H1 (cell line): ENCODE measurements at regions of chr10 and their contacts with region 1.

Region 1: DNA sequence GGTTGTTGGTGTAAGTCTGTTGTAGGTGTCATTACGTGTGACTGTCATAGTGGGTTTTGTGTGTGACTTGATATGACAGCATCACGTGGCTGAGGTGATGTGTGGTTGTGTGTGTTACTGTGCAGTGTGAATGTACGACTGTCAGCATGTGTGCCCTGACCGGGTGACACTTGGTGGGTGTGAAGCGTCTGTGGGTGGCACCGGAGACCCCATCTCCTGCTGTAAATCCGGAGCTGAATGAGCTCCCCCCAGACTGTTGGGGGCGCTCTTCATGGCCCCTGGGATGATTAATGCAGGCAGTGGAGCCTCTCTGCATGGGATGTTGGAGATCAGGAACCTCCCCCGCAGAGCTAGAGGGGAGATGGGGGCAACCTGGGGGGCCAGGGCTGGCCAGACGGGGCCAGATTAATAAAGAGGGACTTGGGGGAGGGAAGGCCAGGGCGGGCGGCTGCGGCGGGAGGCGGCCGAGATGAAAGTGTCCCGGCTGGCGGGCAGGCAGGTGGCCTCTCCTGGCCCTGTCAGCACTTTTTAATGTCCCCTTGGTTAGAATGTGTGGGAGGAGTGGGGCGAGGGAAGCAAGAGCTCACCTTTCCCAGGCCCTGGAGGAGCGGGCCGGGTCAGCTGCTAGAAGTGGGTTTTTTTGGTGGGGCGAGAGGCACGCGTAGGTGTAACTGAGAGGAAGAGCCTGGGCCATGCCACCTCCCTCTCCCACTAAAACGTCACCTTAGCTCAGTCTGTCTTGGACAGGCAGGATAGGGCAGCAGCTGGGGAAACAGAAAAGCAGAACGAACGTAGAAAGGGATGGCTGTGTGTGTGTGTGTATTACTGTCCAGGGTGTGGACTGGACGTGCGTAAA is 34.1 kb downstream of the HIF1AN start:
- DNase-seq: peak in 1 of 2 experiments; percentile 71
- H3K4me3 ChIP-seq: peak overlapping the region; percentile 52 to 78 (median 67)
- H3K27ac ChIP-seq: no peak overlapping the region
- H3K4me1 ChIP-seq: peaks cover 0 to 4% (median 2%) of the 10 kb centered on the region in 4 experiments; a peak in 4 of 7 replicates
- H3K27me3 ChIP-seq: peaks cover 0 to 24% (median 10%) of the 10 kb centered on the region in 4 experiments; a peak in 6 of 7 replicates
- CTCF ChIP-seq: peak; percentile 78 to 88 (median 83)
- EP300 ChIP-seq: no peak; a peak in 1 of 3 replicates
- POLR2A ChIP-seq: no peak
- RAD21 ChIP-seq: peak; percentile 49 to 72

Region 2: DNA sequence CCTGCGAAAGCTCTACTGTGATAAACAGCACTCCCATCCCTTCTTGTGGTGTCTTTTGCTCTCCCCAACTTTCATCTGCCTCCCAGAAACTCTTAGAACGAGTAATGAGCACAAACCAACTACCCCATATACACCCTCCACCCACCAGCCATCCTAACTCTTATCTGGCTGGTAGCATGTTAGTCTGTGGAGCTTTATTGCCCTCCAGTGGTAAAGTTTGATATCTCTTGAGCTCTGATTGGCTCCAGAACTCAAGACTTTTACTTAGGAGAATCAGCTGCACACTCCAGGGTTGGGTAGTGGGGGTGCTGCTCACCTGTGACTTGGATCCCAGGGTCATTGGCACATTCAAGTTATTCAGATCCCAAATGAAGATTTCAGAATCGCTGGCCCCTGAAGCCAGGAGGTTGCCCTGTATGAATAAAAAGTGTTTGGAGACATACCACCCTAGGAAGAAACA is 61.1 kb before region 1 on chr10:
- CTCF ChIA-PET with region 1: no interaction called
- POLR2A ChIA-PET with region 1: no interaction called
- DNase-seq: no peak
- H3K4me3 ChIP-seq: no peak overlapping the region
- H3K27ac ChIP-seq: no peak overlapping the region
- H3K4me1 ChIP-seq: no peaks in the 10 kb centered on the region; a peak in 1 of 7 replicates
- H3K27me3 ChIP-seq: peaks cover 0 to 11% (median 4%) of the 10 kb centered on the region in 4 experiments; a peak in 3 of 7 replicates
- CTCF ChIP-seq: peak in 2 of 3 experiments; percentile 81 to 88; a peak in 3 of 4 replicates
- EP300 ChIP-seq: no peak
- POLR2A ChIP-seq: no peak
- RAD21 ChIP-seq: peak; percentile 95 to 98

Region 3: GRCh38 chr10:100535715-100536353 is 34.0 kb before region 1 on chr10 and contains the start of gene HIF1AN:
- CTCF ChIA-PET with region 1: interaction called, 21 read pairs
- POLR2A ChIA-PET with region 1: no interaction called
- DNase-seq: peak; percentile 84 to 87
- H3K4me3 ChIP-seq: peak within 1 kb of the TSS; percentile 59 to 94 (median 91)
- H3K27ac ChIP-seq: no peak within 1 kb of the TSS
- H3K4me1 ChIP-seq: peaks cover 0 to 9% (median 5%) of the 10 kb centered on the region in 4 experiments; a peak in 5 of 7 replicates
- H3K27me3 ChIP-seq: no peaks in the 10 kb centered on the region
- CTCF ChIP-seq: peak; percentile 90 to 94 (median 91)
- EP300 ChIP-seq: no peak
- POLR2A ChIP-seq: peak; percentile 77 to 90
- RAD21 ChIP-seq: peak in 1 of 2 experiments; percentile 4; a peak in 1 of 4 replicates
- total RNA-seq, gene HIF1AN: 59.7 and 62.8 TPM in 2 replicates

Region 4: GRCh38 chr10:100600218-100600617 is 30.4 kb after region 1 on chr10:
- CTCF ChIA-PET with region 1: interaction called, 10 read pairs
- POLR2A ChIA-PET with region 1: no interaction called
- DNase-seq: no peak
- H3K4me3 ChIP-seq: no peak overlapping the region
- H3K27ac ChIP-seq: no peak overlapping the region
- H3K4me1 ChIP-seq: no peaks in the 10 kb centered on the region
- H3K27me3 ChIP-seq: no peaks in the 10 kb centered on the region
- CTCF ChIP-seq: no peak
- EP300 ChIP-seq: no peak
- POLR2A ChIP-seq: no peak
- RAD21 ChIP-seq: no peak

Region 5: DNA sequence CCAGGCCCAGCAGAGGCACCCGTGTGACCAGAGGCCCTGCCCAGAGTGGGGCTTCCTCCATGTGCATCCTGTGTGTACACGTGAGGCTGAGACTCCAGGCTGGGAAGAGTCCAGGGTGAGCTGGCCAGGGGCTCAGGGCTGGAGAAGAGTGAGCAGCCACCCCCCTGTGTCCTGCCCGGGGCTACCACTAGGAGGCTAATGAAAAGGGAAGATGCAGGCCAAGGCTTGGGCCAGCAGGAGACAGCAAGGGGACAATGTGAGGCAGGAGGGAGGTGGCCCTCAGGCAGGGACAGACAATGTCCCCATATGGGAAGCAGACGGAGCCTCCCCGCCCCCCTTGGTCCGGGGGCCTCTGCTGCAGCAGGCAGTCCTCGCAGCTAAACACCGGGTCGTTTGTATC is 67.9 kb after region 1 on chr10:
- CTCF ChIA-PET with region 1: interaction called, 88 read pairs
- POLR2A ChIA-PET with region 1: no interaction called
- DNase-seq: peak; percentile 29 to 87
- H3K4me3 ChIP-seq: no peak overlapping the region; a peak in 1 of 8 replicates
- H3K27ac ChIP-seq: no peak overlapping the region
- H3K4me1 ChIP-seq: peaks cover 8 to 19% (median 12%) of the 10 kb centered on the region in 4 experiments
- H3K27me3 ChIP-seq: peaks cover 0 to 6% (median 2%) of the 10 kb centered on the region in 4 experiments; a peak in 1 of 7 replicates
- CTCF ChIP-seq: peak; percentile 95 to 98 (median 97)
- EP300 ChIP-seq: no peak
- POLR2A ChIP-seq: no peak
- RAD21 ChIP-seq: peak; percentile 60 to 77

Region 6: GRCh38 chr10:100827819-100828737 is 258.2 kb after region 1 on chr10:
- CTCF ChIA-PET with region 1: interaction called, 11 read pairs
- POLR2A ChIA-PET with region 1: no interaction called
- DNase-seq: peak in 1 of 2 experiments; percentile 74
- H3K4me3 ChIP-seq: peak overlapping the region in 3 of 4 experiments; percentile 26 to 53 (median 28); a peak in 5 of 8 replicates
- H3K27ac ChIP-seq: no peak overlapping the region
- H3K4me1 ChIP-seq: peaks cover 4 to 26% (median 20%) of the 10 kb centered on the region in 4 experiments
- H3K27me3 ChIP-seq: peaks cover 96 to 100% (median 100%) of the 10 kb centered on the region in 4 experiments
- CTCF ChIP-seq: peak in 1 of 3 experiments; percentile 42; a peak in 2 of 4 replicates
- EP300 ChIP-seq: no peak
- POLR2A ChIP-seq: no peak
- RAD21 ChIP-seq: peak; percentile 12 to 52; a peak in 3 of 4 replicates

Region 7: GRCh38 chr10:100878291-100878910 is 308.6 kb after region 1 on chr10:
- CTCF ChIA-PET with region 1: interaction called, 81 read pairs
- POLR2A ChIA-PET with region 1: interaction called, 3 read pairs
- DNase-seq: peak; percentile 31 to 71
- H3K4me3 ChIP-seq: no peak overlapping the region
- H3K27ac ChIP-seq: no peak overlapping the region
- H3K4me1 ChIP-seq: peaks cover 0 to 12% (median 7%) of the 10 kb centered on the region in 4 experiments; a peak in 5 of 7 replicates
- H3K27me3 ChIP-seq: peaks cover 0 to 13% (median 6%) of the 10 kb centered on the region in 4 experiments; a peak in 4 of 7 replicates
- CTCF ChIP-seq: peak; percentile 66 to 90 (median 85)
- EP300 ChIP-seq: no peak
- POLR2A ChIP-seq: no peak
- RAD21 ChIP-seq: peak; percentile 97 to 98